ENCODE measurements at regions of chr2 and their contacts with region 1.

Region 1: DNA sequence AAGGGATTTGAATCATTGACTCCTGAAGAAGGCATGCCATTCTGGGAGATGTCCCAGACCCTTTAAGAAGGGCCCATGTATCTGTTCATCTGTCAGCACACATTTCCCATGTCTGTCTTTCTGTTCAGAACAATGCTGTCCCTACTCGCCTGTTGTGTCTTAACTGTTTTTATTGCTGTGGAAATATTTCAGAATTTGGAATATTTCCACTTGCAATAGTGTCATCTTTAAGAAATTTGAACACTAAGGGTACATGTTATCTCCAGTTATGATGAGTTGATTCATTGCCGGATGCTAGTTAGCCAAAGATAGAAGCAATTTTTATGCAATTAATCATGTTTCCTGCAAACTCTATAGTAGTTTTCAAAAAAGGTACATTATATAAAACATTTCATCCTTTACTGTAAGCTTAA is 36.9 kb upstream of the NT5C1B start:
- DNase-seq: peak; percentile 84
- ATAC-seq: peak; percentile 74
- H3K4me3 ChIP-seq: no peak overlapping the region
- H3K27ac ChIP-seq: peak overlapping the region; percentile 71
- H3K4me1 ChIP-seq: peaks cover 69% of the 10 kb centered on the region
- H3K27me3 ChIP-seq: no peaks in the 10 kb centered on the region
- CTCF ChIP-seq: no peak

Region 2: GRCh38 chr2:18560031-18560796 is 66.0 kb before region 1 on chr2 and contains the start of gene RDH14:
- CTCF ChIA-PET with region 1: no interaction called
- POLR2A ChIA-PET with region 1: no interaction called
- intact Hi-C with region 1: loop called (anchors 5 kb)
- DNase-seq: peak; percentile 84
- ATAC-seq: peak; percentile 92
- H3K4me3 ChIP-seq: peak within 1 kb of the TSS; percentile 95
- H3K27ac ChIP-seq: peak within 1 kb of the TSS; percentile 48
- H3K4me1 ChIP-seq: peaks cover 17% of the 10 kb centered on the region
- H3K27me3 ChIP-seq: no peaks in the 10 kb centered on the region
- CTCF ChIP-seq: no peak
- total RNA-seq, gene RDH14: 30.9 and 43.4 TPM in 2 replicates

Region 3: DNA sequence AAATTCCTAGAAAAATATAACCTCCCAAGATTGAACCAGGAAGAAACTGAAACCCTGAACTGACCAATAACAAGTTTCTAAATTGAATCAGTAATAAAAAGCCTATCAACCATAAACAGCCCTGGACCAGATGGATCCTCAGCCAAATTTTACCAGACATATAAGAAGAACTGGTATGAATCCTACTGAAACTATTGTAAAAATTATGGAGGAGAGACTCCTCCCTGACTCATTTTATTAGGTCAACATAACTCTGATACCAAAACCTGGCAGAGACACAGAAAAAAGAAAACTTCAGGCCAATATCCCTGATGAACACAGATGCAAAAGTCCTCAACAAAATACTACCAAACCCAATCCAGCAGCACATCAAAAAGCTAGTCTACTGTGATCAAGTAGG is 48.2 kb before region 1 on chr2:
- CTCF ChIA-PET with region 1: no interaction called
- POLR2A ChIA-PET with region 1: no interaction called
- intact Hi-C with region 1: loop called (anchors 1 kb)
- DNase-seq: peak; percentile 57
- ATAC-seq: peak; percentile 72
- H3K4me3 ChIP-seq: no peak overlapping the region
- H3K27ac ChIP-seq: no peak overlapping the region
- H3K4me1 ChIP-seq: peaks cover 9% of the 10 kb centered on the region; the same call in 1 of the 2 replicates
- H3K27me3 ChIP-seq: no peaks in the 10 kb centered on the region
- CTCF ChIP-seq: no peak